ENCODE measurements at regions of chr10 and their contacts with region 1.

Region 1: GRCh38 chr10:118595598-118596425 is at the start of gene PRLHR:
- DNase-seq: peak; percentile 37
- ATAC-seq: no peak
- H3K4me3 Mint-ChIP-seq: no peak within 1 kb of the TSS
- H3K27ac Mint-ChIP-seq: no peak within 1 kb of the TSS
- H3K4me1 Mint-ChIP-seq: peaks cover 12% of the 10 kb centered on the region
- H3K27me3 Mint-ChIP-seq: peaks cover 52% of the 10 kb centered on the region
- total RNA-seq, gene PRLHR: not detected

Region 2: GRCh38 chr10:118662228-118663035 is 66.6 kb after region 1 on chr10:
- CTCF ChIA-PET with region 1: interaction called, 3 read pairs
- POLR2A ChIA-PET with region 1: interaction called, 10 read pairs
- intact Hi-C with region 1: no loop called
- DNase-seq: no peak
- ATAC-seq: peak; percentile 30
- H3K4me3 Mint-ChIP-seq: no peak overlapping the region
- H3K27ac Mint-ChIP-seq: peak overlapping the region; percentile 3
- H3K4me1 Mint-ChIP-seq: peaks cover 63% of the 10 kb centered on the region
- H3K27me3 Mint-ChIP-seq: no peaks in the 10 kb centered on the region

Region 3: GRCh38 chr10:119933179-119933578 is 1337.4 kb after region 1 on chr10:
- CTCF ChIA-PET with region 1: no interaction called
- POLR2A ChIA-PET with region 1: no interaction called
- intact Hi-C with region 1: no loop called
- DNase-seq: no peak
- ATAC-seq: no peak
- H3K4me3 Mint-ChIP-seq: no peak overlapping the region
- H3K27ac Mint-ChIP-seq: no peak overlapping the region
- H3K4me1 Mint-ChIP-seq: peaks cover 13% of the 10 kb centered on the region
- H3K27me3 Mint-ChIP-seq: no peaks in the 10 kb centered on the region